Activated T-helper 1 cell treated with anti-CD3 and anti-CD28 coated beads, Interleukin-12 subunit alpha, Interleukin-12 subunit beta, Interleukin-2, Interleukin-4 antibody, amounts not matched to agents 30 ng/mL and 10 ng/mL and 1 ng/mL, durations not matched to agents 14 hours and 24 hours and 36 hours (primary cell): ENCODE measurements at regions of chr11 and their contacts with region 1.

Region 1: GRCh38 chr11:113289431-113290187 is 24.8 kb upstream of the TTC12 start:
- DNase-seq: peak; percentile 52
- H3K4me3 Mint-ChIP-seq: no peak overlapping the region
- H3K27ac Mint-ChIP-seq: no peak overlapping the region
- H3K4me1 Mint-ChIP-seq: no peaks in the 10 kb centered on the region
- H3K27me3 Mint-ChIP-seq: peaks cover 4% of the 10 kb centered on the region

Region 2: GRCh38 chr11:112961146-112961668 is 328.4 kb before region 1 on chr11 and contains the start of gene NCAM1:
- intact Hi-C with region 1: loop called (anchors 5 kb)
- DNase-seq: peak; percentile 1
- H3K4me3 Mint-ChIP-seq: peak within 1 kb of the TSS; percentile 82
- H3K27ac Mint-ChIP-seq: no peak within 1 kb of the TSS
- H3K4me1 Mint-ChIP-seq: peaks cover 19% of the 10 kb centered on the region
- H3K27me3 Mint-ChIP-seq: peaks cover 71% of the 10 kb centered on the region
- total RNA-seq, gene NCAM1: not detected in 2 replicates

Region 3: DNA sequence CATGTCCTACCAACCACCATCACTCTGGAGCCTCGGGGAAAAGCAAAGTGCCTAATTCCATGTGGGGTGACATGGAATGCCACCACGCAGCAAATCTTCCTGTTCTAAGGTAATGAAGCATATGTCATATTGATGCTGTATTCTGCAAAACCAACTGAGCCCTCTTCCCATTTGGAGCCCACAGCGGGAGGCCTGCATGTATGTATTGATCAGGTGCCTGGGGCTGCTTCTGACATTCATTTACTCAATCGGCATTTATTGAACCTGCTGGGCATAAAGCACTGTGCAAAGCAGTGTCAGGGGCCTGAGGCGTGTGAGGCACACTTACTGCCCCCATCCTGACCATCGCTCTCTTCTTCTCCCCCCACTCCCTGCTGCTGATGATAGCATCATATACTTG is 137.1 kb after region 1 on chr11:
- intact Hi-C with region 1: no loop called
- DNase-seq: no peak
- H3K4me3 Mint-ChIP-seq: no peak overlapping the region
- H3K27ac Mint-ChIP-seq: no peak overlapping the region
- H3K4me1 Mint-ChIP-seq: no peaks in the 10 kb centered on the region
- H3K27me3 Mint-ChIP-seq: peaks cover 2% of the 10 kb centered on the region